Posterior vena cava (tissue), 2 donors: ENCODE measurements at regions of chr9 and their contacts with region 1.

Region 1: GRCh38 chr9:75471549-75472114 is 383.3 kb downstream of the OSTF1 start:
- DNase-seq: no peak

Region 2: GRCh38 chr9:75452512-75452911 is 19.1 kb before region 1 on chr9:
- intact Hi-C with region 1: loop called in 1 of 2 experiments (anchors 2 kb)
- DNase-seq: no peak